ENCODE measurements at regions of chr7 and their contacts with region 1.

Region 1: GRCh38 chr7:25951031-25951948 is 200.7 kb upstream of the NFE2L3 start:
- DNase-seq: peak; percentile 94
- ATAC-seq: peak; percentile 99
- H3K4me3 Mint-ChIP-seq: peak overlapping the region; percentile 80
- H3K27ac Mint-ChIP-seq: peak overlapping the region; percentile 72
- H3K4me1 Mint-ChIP-seq: peaks cover 17% of the 10 kb centered on the region
- H3K27me3 Mint-ChIP-seq: no peaks in the 10 kb centered on the region

Region 2: GRCh38 chr7:25503306-25503705 is 448.0 kb before region 1 on chr7:
- CTCF ChIA-PET with region 1: no interaction called
- POLR2A ChIA-PET with region 1: no interaction called
- intact Hi-C with region 1: no loop called
- DNase-seq: no peak
- ATAC-seq: no peak
- H3K4me3 Mint-ChIP-seq: no peak overlapping the region
- H3K27ac Mint-ChIP-seq: no peak overlapping the region
- H3K4me1 Mint-ChIP-seq: no peaks in the 10 kb centered on the region
- H3K27me3 Mint-ChIP-seq: peaks cover 4% of the 10 kb centered on the region

Region 3: GRCh38 chr7:25862260-25863037 is 88.8 kb before region 1 on chr7:
- CTCF ChIA-PET with region 1: no interaction called
- POLR2A ChIA-PET with region 1: no interaction called
- intact Hi-C with region 1: loop called in 1 of 2 experiments (anchors 1 kb)
- DNase-seq: peak; percentile 99
- ATAC-seq: peak; percentile 94
- H3K4me3 Mint-ChIP-seq: peak overlapping the region; percentile 68
- H3K27ac Mint-ChIP-seq: peak overlapping the region; percentile 69
- H3K4me1 Mint-ChIP-seq: peaks cover 26% of the 10 kb centered on the region
- H3K27me3 Mint-ChIP-seq: peaks cover 46% of the 10 kb centered on the region

Region 4: GRCh38 chr7:25908154-25908949 is 42.9 kb before region 1 on chr7:
- CTCF ChIA-PET with region 1: interaction called, 4 read pairs
- POLR2A ChIA-PET with region 1: interaction called, 13 read pairs
- intact Hi-C with region 1: no loop called
- DNase-seq: no peak
- ATAC-seq: peak; percentile 47
- H3K4me3 Mint-ChIP-seq: no peak overlapping the region
- H3K27ac Mint-ChIP-seq: no peak overlapping the region
- H3K4me1 Mint-ChIP-seq: peaks cover 14% of the 10 kb centered on the region
- H3K27me3 Mint-ChIP-seq: peaks cover 10% of the 10 kb centered on the region

Region 5: GRCh38 chr7:26022982-26023381 is 71.7 kb after region 1 on chr7:
- CTCF ChIA-PET with region 1: no interaction called
- POLR2A ChIA-PET with region 1: no interaction called
- intact Hi-C with region 1: no loop called
- DNase-seq: no peak
- ATAC-seq: no peak
- H3K4me3 Mint-ChIP-seq: no peak overlapping the region
- H3K27ac Mint-ChIP-seq: no peak overlapping the region
- H3K4me1 Mint-ChIP-seq: no peaks in the 10 kb centered on the region
- H3K27me3 Mint-ChIP-seq: peaks cover 6% of the 10 kb centered on the region

Region 6: GRCh38 chr7:26307226-26307625 is 355.9 kb after region 1 on chr7:
- CTCF ChIA-PET with region 1: no interaction called
- POLR2A ChIA-PET with region 1: no interaction called
- intact Hi-C with region 1: no loop called
- DNase-seq: no peak
- ATAC-seq: no peak
- H3K4me3 Mint-ChIP-seq: no peak overlapping the region
- H3K27ac Mint-ChIP-seq: no peak overlapping the region
- H3K4me1 Mint-ChIP-seq: peaks cover 10% of the 10 kb centered on the region
- H3K27me3 Mint-ChIP-seq: no peaks in the 10 kb centered on the region